Heart left ventricle (tissue), 16 donors: ENCODE measurements at regions of chrX and their contacts with region 1.

Region 1: GRCh38 chrX:117996918-117997480 is 119.6 kb downstream of the KLHL13 start:
- DNase-seq: no peak
- ATAC-seq: no peak
- H3K4me3 ChIP-seq: no peak overlapping the region
- H3K27ac ChIP-seq: no peak overlapping the region
- H3K4me1 ChIP-seq: no peaks in the 10 kb centered on the region
- H3K27me3 ChIP-seq: no peaks in the 10 kb centered on the region
- CTCF ChIP-seq: peak in 9 of 12 donors; percentile 9 to 48 (median 25)
- POLR2A ChIP-seq: no peak

Region 2: DNA sequence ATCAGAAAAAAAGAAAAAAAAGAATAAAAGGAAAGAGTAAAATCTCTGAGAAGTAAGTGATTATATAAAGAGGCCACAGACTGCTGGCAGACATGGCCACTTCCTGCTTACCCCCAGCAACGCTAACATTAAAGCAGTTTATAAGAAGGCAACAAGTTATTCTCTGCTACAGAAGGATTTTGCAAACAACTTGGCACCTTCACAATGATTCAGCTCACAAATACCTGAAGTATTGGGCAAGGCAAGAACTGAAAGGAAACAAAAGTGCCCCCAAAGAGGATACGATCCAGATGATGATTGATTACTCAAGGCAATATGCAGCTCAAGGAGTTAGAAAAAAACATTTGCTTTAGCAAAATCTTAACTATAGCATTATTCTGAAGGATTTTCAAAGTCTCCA is 599.2 kb before region 1 on chrX:
- intact Hi-C with region 1: no loop called
- DNase-seq: no peak
- ATAC-seq: no peak
- H3K4me3 ChIP-seq: no peak overlapping the region
- H3K27ac ChIP-seq: no peak overlapping the region
- H3K4me1 ChIP-seq: no peaks in the 10 kb centered on the region
- H3K27me3 ChIP-seq: no peaks in the 10 kb centered on the region
- CTCF ChIP-seq: no peak
- POLR2A ChIP-seq: no peak

Region 3: DNA sequence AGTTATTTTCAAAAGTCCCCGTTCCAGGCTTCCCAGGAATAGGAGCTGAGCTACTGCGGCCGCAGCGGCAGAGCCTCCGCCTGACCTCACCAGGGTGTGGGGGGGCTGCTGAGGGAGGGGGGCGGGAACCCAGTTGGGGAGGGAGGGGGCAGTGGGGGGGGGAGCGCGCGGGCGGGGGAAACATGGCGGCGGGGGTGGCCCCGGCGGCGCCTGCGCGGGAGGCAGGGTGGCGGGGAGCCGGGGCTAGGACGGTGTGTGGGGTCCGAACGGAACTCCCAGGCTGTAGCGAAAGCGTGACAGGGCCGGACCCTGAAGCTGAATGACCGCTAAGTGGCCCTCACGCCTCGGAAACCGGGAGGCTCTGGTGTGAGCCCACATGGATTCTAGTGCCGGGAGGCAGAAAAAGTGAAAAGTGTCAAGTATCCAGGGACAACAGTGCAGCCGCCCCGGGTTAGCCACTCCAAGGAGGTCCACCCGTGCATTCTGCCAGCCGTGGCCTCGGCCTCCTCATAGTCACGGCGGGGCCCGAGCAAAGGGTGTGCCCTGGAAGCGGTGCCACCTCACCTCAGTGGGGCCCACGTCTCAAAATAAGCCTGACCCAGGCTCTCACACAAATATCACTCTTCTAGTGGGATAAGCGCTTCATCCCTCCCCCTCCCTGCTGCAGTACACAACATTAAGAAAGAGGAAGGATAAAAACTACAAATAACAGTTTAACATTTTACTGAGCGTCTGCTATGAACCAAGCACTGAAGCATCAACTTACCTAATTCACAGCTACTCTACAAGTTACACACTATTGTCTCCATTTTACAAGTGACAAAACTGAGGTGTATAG is 119.9 kb after region 1 on chrX and contains the start of gene KLHL13:
- intact Hi-C with region 1: loop called in 2 of 10 experiments (anchors 5 to 10 kb)
- DNase-seq: peak; percentile 43 to 57 (median 45)
- ATAC-seq: peak; percentile 51 to 86 (median 82)
- H3K4me3 ChIP-seq: peak within 1 kb of the TSS; percentile 37 to 82 (median 62)
- H3K27ac ChIP-seq: peak within 1 kb of the TSS; percentile 47 to 86 (median 77)
- H3K4me1 ChIP-seq: peaks cover 0 to 4% (median 0%) of the 10 kb centered on the region in 12 donors
- H3K27me3 ChIP-seq: peaks cover 0 to 11% (median 0%) of the 10 kb centered on the region in 9 donors
- CTCF ChIP-seq: no peak
- POLR2A ChIP-seq: no peak
- total RNA-seq, gene KLHL13: 5.9 to 14.2 (median 9.0) TPM

Region 4: DNA sequence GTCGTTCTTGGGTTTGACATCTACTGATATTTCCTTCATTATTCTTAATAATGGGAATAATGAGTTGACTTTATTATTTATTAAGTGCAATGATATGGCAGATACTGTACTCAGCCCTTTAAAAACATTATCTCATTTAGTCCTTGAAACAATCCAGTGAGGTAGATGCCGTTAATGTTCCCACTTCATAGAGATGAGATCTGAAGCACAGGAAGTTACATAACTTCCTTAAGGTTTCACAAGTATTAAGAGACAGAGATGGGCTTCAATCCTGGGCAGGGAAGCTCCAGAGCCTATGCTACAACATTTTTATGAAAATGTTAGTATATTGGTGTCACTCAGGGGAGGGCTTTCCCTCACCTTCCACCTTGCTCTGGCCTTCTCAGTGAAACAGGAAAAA is 129.3 kb after region 1 on chrX:
- intact Hi-C with region 1: loop called in 1 of 10 experiments (anchors 10 kb)
- DNase-seq: no peak
- ATAC-seq: no peak
- H3K4me3 ChIP-seq: no peak overlapping the region
- H3K27ac ChIP-seq: no peak overlapping the region
- H3K4me1 ChIP-seq: no peaks in the 10 kb centered on the region
- H3K27me3 ChIP-seq: peaks cover 0 to 6% (median 0%) of the 10 kb centered on the region in 9 donors
- CTCF ChIP-seq: no peak
- POLR2A ChIP-seq: no peak

Region 5: GRCh38 chrX:118226090-118226428 is 229.1 kb after region 1 on chrX:
- intact Hi-C with region 1: loop called in 9 of 10 experiments (anchors 5 to 10 kb)
- DNase-seq: no peak
- ATAC-seq: peak in 2 of 4 donors; percentile 42 to 62
- H3K4me3 ChIP-seq: no peak overlapping the region
- H3K27ac ChIP-seq: no peak overlapping the region
- H3K4me1 ChIP-seq: peaks cover 0 to 3% (median 0%) of the 10 kb centered on the region in 12 donors
- H3K27me3 ChIP-seq: peaks cover 0 to 7% (median 0%) of the 10 kb centered on the region in 9 donors
- CTCF ChIP-seq: peak in 10 of 12 donors; percentile 14 to 53 (median 38)
- POLR2A ChIP-seq: no peak